Right lobe of liver (tissue), 6 donors: ENCODE measurements at regions of chr7 and their contacts with region 1.

Region 1: DNA sequence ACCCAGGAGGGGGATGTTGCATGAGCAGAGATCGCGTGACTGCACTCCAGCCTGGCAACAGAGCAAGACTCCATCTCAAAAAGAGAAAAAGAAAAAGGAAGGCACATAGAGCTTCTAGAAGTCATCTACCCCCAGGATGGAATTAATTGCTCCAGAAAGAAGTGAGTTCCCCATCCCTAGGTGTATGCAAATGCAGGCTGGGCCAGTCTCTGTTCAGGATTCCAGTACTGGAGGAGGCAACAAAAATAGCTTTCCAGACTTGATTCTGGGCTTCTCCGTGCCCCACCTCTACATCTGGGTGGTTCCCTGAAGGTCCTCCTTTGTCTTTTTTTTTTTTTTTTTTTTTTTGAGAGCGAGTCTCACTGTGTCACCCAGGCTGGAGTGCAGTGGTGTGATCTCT is 28.6 kb downstream of the CASTOR2 start:
- DNase-seq: no peak
- ATAC-seq: no peak
- H3K4me3 ChIP-seq: no peak overlapping the region
- H3K27ac ChIP-seq: no peak overlapping the region
- H3K4me1 ChIP-seq: no peaks in the 10 kb centered on the region
- H3K27me3 ChIP-seq: no peaks in the 10 kb centered on the region
- CTCF ChIP-seq: no peak
- POLR2A ChIP-seq: no peak

Region 2: GRCh38 chr7:75054744-75055143 is 61.6 kb after region 1 on chr7:
- intact Hi-C with region 1: loop called in 1 of 2 experiments (anchors 10 kb)
- DNase-seq: no peak
- ATAC-seq: no peak
- H3K4me3 ChIP-seq: no peak overlapping the region
- H3K27ac ChIP-seq: no peak overlapping the region
- H3K4me1 ChIP-seq: no peaks in the 10 kb centered on the region
- H3K27me3 ChIP-seq: no peaks in the 10 kb centered on the region
- CTCF ChIP-seq: no peak
- POLR2A ChIP-seq: no peak